CD4-positive, alpha-beta T cell (primary cell): ENCODE measurements at regions of chr4 and their contacts with region 1.

Region 1: DNA sequence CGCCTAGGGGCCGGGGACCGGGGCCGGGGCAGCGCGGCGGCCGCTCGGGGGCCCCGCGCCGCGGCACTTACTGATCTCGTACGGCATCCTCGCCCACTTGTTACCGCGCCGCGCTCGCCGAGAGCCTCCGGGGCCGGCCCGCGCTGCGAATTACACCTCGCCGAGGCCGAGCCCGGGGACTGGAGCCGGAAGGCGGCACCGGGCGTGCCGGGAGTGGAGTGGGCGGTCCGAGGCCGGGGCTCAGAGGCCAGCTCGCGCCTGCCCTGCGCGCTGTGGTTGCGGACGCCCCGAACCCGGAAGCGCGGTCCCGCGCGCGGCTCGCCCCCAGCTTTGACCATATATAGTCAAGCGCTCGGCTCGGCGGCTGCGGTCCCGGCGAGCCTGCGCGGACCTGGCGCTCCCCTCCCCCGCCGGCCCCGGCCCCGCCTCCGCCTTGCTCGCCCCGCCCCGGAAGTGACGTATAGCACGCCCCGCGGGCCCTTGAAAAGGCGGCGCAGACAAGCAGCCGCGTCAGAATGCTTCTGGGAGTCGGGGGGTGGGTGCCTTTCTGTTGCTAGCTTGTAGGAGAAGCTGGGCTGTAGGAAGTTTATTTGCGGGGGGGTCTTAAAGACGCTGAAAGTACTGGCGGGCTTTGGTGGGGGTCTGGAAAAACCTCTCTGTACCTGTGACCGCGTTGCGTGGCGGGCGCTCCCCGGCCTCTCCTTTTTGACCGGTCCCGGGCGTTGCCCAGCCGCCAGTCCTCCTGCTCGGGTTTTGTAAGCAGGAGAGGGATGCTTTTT is at the start of gene WDR1:
- DNase-seq: peak; percentile 82 to 98 (median 92)
- ATAC-seq: peak; percentile 64
- H3K4me3 ChIP-seq: peak within 1 kb of the TSS; percentile 90
- H3K4me3 Mint-ChIP-seq: peak within 1 kb of the TSS; percentile 99
- H3K27ac ChIP-seq: peak within 1 kb of the TSS; percentile 96 to 98
- H3K27ac Mint-ChIP-seq: peak within 1 kb of the TSS; percentile 99
- H3K4me1 ChIP-seq: peaks cover 85% of the 10 kb centered on the region
- H3K4me1 Mint-ChIP-seq: peaks cover 91% of the 10 kb centered on the region
- H3K27me3 ChIP-seq: no peaks in the 10 kb centered on the region
- H3K27me3 Mint-ChIP-seq: no peaks in the 10 kb centered on the region
- CTCF ChIP-seq: no peak
- total RNA-seq, gene WDR1: 197 to 198 TPM

Region 2: GRCh38 chr4:10096201-10096977 is 20.4 kb before region 1 on chr4:
- CTCF ChIA-PET with region 1: interaction called, 8 read pairs
- POLR2A ChIA-PET with region 1: interaction called, 126 read pairs
- intact Hi-C with region 1: loop called (anchors 1 kb)
- DNase-seq: peak; percentile 39 to 88 (median 77)
- ATAC-seq: peak; percentile 75
- H3K4me3 ChIP-seq: no peak overlapping the region
- H3K4me3 Mint-ChIP-seq: peak overlapping the region; percentile 49
- H3K27ac ChIP-seq: peak overlapping the region; percentile 58 to 59
- H3K27ac Mint-ChIP-seq: peak overlapping the region; percentile 99
- H3K4me1 ChIP-seq: peaks cover 99% of the 10 kb centered on the region
- H3K4me1 Mint-ChIP-seq: peaks cover 97% of the 10 kb centered on the region
- H3K27me3 ChIP-seq: no peaks in the 10 kb centered on the region
- H3K27me3 Mint-ChIP-seq: no peaks in the 10 kb centered on the region
- CTCF ChIP-seq: no peak

Region 3: DNA sequence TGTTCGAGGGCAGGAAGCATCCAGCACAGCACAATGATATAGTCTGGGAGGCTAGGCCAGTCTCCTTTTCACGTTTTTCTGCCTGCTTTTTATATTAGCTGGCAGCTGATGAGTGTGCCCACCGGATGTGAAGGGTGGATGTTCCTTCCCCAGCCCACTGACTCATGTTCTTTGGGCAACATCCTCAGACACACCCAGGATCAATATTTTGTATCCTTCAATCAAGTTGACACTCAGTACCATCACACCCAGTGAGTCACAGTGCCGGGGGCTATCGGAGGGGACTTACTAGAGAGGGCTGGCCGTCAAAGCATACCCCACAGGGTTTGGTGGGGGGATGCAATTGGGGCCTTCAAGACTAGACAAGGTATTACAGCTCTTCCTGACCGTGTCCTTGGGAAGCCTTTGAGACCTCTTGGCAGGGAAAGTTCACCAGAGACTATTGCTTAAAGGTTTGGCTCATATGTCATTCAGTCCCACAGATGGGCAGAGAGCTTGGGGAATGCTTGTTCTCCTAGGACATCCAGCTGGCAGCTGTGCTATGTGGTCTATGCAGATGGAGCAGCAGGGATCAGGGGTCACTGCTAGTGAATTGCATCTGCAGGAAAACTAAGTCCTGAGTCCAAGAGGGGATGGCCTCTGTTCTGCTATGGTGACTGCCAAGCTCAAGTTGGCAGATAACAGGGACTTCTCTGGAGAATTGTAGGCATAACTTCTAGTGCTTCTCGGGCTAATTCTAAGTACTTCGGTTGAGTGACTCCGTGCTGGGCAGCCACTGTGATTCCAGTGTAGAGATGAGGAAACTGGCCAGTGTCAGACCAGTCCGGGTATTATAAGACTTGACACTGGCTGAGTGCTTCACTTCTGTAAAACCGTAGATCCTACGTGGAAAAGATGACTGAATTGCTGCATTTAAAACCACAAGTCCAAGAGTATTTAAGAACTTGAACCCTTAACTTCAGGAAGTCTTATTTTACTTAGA is 12.7 kb after region 1 on chr4:
- CTCF ChIA-PET with region 1: no interaction called
- POLR2A ChIA-PET with region 1: interaction called, 12 read pairs
- intact Hi-C with region 1: no loop called
- DNase-seq: no peak
- ATAC-seq: no peak
- H3K4me3 ChIP-seq: no peak overlapping the region
- H3K4me3 Mint-ChIP-seq: no peak overlapping the region
- H3K27ac ChIP-seq: no peak overlapping the region
- H3K27ac Mint-ChIP-seq: no peak overlapping the region
- H3K4me1 ChIP-seq: peaks cover 6% of the 10 kb centered on the region
- H3K4me1 Mint-ChIP-seq: peaks cover 8% of the 10 kb centered on the region
- H3K27me3 ChIP-seq: no peaks in the 10 kb centered on the region
- H3K27me3 Mint-ChIP-seq: no peaks in the 10 kb centered on the region
- CTCF ChIP-seq: no peak

Region 4: DNA sequence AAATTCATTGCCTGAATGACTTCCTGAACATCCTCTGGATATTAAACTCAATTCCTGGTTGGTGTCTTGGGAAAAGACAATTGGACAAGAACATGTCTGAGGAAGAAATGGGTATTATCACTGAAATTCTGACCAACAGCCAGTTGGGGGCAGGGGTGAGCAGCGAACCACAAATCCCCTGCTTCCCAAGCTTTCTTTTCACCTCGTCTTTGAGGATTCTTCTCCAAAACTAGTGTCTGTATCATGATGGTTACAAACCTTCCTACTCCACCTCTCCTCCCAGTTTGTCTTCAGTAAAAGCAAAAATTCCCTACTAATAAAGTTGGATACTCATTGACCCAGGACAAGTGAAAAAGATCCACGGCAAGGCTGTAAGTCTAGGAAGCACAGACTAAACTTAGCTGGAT is 48.1 kb after region 1 on chr4:
- CTCF ChIA-PET with region 1: no interaction called
- POLR2A ChIA-PET with region 1: interaction called, 25 read pairs
- intact Hi-C with region 1: no loop called
- DNase-seq: peak in 1 of 14 experiments; percentile 19
- ATAC-seq: no peak
- H3K4me3 ChIP-seq: no peak overlapping the region
- H3K4me3 Mint-ChIP-seq: no peak overlapping the region
- H3K27ac ChIP-seq: no peak overlapping the region
- H3K27ac Mint-ChIP-seq: no peak overlapping the region
- H3K4me1 ChIP-seq: peaks cover 32% of the 10 kb centered on the region
- H3K4me1 Mint-ChIP-seq: peaks cover 21% of the 10 kb centered on the region
- H3K27me3 ChIP-seq: no peaks in the 10 kb centered on the region
- H3K27me3 Mint-ChIP-seq: no peaks in the 10 kb centered on the region
- CTCF ChIP-seq: peak; percentile 61